Activated CD8-positive, alpha-beta T cell treated with anti-CD3 and anti-CD28 coated beads for 36 hours (primary cell): ENCODE measurements at regions of chr1 and their contacts with region 1.

Region 1: DNA sequence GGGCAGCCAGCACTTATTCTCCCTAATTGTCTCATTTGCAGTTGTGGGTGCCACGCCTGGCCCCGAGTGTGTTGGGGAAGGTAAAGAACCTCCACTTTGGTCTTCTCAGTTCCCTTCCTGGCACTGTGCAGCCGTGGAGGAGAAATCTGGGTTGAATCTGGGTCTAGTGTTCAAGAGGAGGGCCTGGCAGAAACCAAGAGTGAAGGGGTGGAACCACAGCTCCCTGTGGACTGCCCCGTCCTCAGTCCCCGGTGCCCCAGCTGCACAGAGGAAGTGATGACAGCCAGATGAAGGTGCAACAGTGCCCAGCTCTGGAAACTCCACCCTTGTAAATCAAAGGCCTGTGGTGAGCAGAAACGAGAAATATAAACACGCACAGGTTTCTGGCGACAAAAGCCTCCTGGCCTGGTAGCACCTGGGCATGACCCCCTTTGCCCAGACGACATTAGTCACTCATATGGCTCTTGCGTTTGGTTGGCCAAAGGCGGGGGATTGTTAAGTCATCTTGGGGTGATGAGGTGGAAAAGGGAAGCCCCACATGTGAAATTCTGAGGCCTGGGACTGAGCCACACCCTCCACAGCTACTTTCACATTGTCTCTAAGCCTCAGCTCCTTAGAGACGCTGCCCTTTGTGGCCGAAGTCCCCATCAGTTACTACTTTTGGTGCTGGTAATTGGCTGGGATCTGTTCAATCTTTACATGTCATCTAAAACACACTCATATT is 4.2 kb upstream of the ECE1 start:
- DNase-seq: peak; percentile 95
- ATAC-seq: peak; percentile 66
- H3K4me3 Mint-ChIP-seq: peak overlapping the region; percentile 63
- H3K27ac Mint-ChIP-seq: peak overlapping the region; percentile 95
- H3K4me1 Mint-ChIP-seq: peaks cover 85% of the 10 kb centered on the region
- H3K27me3 Mint-ChIP-seq: no peaks in the 10 kb centered on the region
- CTCF ChIP-seq: no peak

Region 2: GRCh38 chr1:20883766-20884165 is 410.7 kb before region 1 on chr1:
- CTCF ChIA-PET with region 1: no interaction called
- POLR2A ChIA-PET with region 1: no interaction called
- intact Hi-C with region 1: no loop called
- DNase-seq: no peak
- ATAC-seq: no peak
- H3K4me3 Mint-ChIP-seq: no peak overlapping the region
- H3K27ac Mint-ChIP-seq: no peak overlapping the region
- H3K4me1 Mint-ChIP-seq: no peaks in the 10 kb centered on the region
- H3K27me3 Mint-ChIP-seq: no peaks in the 10 kb centered on the region
- CTCF ChIP-seq: no peak

Region 3: DNA sequence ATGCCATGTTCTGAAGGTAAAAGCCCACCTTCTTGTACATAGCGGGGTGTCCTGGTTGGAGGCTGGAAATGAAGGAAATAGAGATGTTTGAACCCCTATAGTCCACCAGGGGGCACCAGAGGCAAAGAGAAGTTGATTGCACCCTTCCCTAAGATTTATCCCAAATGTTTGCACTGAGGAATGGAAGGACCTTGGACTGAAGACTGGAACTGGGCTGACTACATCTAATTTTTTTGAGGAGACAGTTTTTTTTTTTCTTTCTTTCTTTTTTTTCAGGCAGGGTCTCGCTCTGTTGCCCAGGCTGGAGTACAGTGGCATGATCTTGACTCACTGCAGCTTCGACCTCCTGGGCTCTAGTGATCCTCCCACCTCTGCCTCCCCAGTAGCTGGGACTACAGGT is 62.4 kb before region 1 on chr1:
- CTCF ChIA-PET with region 1: interaction called, 10 read pairs
- POLR2A ChIA-PET with region 1: no interaction called
- intact Hi-C with region 1: no loop called
- DNase-seq: peak; percentile 38
- ATAC-seq: peak; percentile 64
- H3K4me3 Mint-ChIP-seq: no peak overlapping the region
- H3K27ac Mint-ChIP-seq: no peak overlapping the region
- H3K4me1 Mint-ChIP-seq: no peaks in the 10 kb centered on the region
- H3K27me3 Mint-ChIP-seq: no peaks in the 10 kb centered on the region
- CTCF ChIP-seq: peak; percentile 99

Region 4: DNA sequence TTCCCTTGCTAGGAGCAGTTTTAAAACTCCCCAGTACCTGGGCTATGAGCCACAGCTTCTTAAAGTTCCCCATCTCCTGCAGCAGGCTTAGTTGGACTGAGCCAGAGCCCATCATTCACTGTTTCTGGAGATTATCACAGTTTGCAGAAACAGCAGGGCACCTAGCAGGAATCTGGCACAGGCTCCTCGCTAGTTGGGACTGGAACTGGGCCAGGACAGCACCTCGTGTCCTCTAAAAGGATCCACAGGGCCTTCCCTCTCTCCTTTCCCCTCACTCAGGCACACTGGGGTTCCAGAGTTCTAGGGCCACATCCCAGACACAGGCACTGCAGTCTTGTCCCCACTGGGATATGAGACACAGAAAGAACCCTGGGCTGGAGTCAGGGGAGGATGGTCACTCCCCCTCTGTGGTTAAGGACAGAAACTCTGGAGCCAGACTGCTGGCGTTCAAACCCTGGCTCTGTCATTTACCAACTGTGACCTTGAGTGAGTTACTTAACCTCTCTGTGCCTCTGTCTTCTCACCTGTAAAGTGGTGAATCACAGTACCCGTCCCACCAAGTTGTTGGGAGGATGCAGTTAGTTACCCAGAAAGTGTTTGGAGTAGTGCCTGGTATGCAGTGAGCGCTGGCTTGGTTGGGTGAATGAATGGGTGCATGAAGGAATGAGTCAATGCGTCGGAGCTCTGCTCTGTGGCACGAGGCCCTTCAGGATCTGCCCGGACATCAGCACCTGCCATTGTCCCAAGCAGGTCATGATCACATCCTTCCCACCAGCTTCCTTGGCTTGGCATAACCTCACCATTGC is 14.6 kb after region 1 on chr1:
- CTCF ChIA-PET with region 1: interaction called, 6 read pairs
- POLR2A ChIA-PET with region 1: interaction called, 10 read pairs
- intact Hi-C with region 1: no loop called
- DNase-seq: no peak
- ATAC-seq: no peak
- H3K4me3 Mint-ChIP-seq: no peak overlapping the region
- H3K27ac Mint-ChIP-seq: peak overlapping the region; percentile 32
- H3K4me1 Mint-ChIP-seq: peaks cover 72% of the 10 kb centered on the region
- H3K27me3 Mint-ChIP-seq: no peaks in the 10 kb centered on the region
- CTCF ChIP-seq: no peak

Region 5: DNA sequence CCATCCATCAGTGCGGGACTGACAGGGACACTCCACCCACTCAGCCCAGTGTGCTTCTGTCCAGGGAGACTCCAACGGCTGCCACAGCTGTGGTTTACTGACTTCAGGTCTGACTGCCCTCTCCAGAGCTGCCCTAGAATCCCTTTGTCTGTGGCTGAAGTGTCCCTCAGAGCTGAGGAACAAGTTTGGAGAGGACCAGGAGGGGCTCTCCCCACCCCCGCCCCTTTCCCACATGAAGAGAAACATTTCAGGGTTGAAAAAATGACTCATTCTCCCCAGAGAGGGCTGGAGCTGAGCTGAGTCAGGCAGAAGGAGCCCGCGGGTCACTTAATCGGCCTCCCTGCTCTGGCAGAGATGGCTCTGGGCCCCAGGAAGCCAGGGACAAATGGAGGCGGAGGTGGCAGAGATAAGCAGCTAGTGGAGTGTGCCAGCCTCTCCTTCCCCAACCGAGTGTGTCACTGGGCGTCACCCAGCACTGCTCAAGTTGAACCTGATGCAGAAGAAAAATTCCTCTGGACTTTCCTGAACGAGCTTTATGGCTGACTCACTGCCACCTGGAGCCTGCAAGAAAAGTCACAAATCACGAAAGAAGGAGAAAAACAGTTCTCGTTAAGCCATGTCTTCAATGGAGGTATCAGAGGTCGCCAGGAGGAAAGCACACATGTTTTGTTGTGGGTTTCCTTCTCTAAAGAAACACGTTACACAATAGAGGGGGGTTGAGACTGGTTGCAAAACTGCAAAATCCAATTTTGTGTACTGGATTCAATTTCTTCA is 30.1 kb after region 1 on chr1:
- CTCF ChIA-PET with region 1: interaction called, 16 read pairs
- POLR2A ChIA-PET with region 1: interaction called, 90 read pairs
- intact Hi-C with region 1: loop called (anchors 2 kb)
- DNase-seq: peak; percentile 91
- ATAC-seq: peak; percentile 86
- H3K4me3 Mint-ChIP-seq: peak overlapping the region; percentile 56
- H3K27ac Mint-ChIP-seq: peak overlapping the region; percentile 94
- H3K4me1 Mint-ChIP-seq: peaks cover 84% of the 10 kb centered on the region
- H3K27me3 Mint-ChIP-seq: no peaks in the 10 kb centered on the region
- CTCF ChIP-seq: no peak

Region 6: GRCh38 chr1:21334214-21335087 is 40.0 kb after region 1 on chr1:
- CTCF ChIA-PET with region 1: interaction called, 30 read pairs
- POLR2A ChIA-PET with region 1: interaction called, 39 read pairs
- intact Hi-C with region 1: no loop called
- DNase-seq: peak; percentile 90
- ATAC-seq: peak; percentile 90
- H3K4me3 Mint-ChIP-seq: peak overlapping the region; percentile 76
- H3K27ac Mint-ChIP-seq: peak overlapping the region; percentile 96
- H3K4me1 Mint-ChIP-seq: peaks cover 87% of the 10 kb centered on the region
- H3K27me3 Mint-ChIP-seq: no peaks in the 10 kb centered on the region
- CTCF ChIP-seq: peak; percentile 83

Region 7: GRCh38 chr1:21344750-21345443 is 50.5 kb after region 1 on chr1:
- CTCF ChIA-PET with region 1: interaction called, 19 read pairs
- POLR2A ChIA-PET with region 1: interaction called, 62 read pairs
- intact Hi-C with region 1: no loop called
- DNase-seq: peak; percentile 35
- ATAC-seq: peak; percentile 11
- H3K4me3 Mint-ChIP-seq: peak overlapping the region; percentile 82
- H3K27ac Mint-ChIP-seq: peak overlapping the region; percentile 95
- H3K4me1 Mint-ChIP-seq: peaks cover 38% of the 10 kb centered on the region
- H3K27me3 Mint-ChIP-seq: no peaks in the 10 kb centered on the region
- CTCF ChIP-seq: no peak